AG04449 (cell line): ENCODE measurements at regions of chr1 and their contacts with region 1.

Region 1: DNA sequence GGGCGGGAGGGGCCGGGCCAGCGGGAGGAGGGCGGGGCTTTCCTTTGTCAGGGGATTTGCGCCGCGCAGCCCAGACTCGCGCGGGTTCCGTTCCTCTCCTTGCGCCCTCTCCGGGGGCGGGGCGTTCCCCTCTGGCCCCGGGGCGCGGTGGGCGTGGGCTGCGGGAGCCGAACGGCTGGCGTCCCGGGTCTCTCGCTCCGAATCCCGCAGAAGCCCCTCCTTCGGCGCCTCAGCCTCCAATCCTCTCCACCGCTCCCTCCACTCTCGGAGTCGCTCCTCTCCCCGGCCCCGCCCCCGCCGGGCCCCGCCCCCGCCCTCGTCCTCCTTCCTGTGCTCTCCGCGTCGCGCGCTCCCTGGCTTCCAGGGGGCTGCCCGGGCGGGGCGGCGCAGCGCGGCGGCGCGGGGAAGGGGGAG is 82.8 kb upstream of the BMP8A start:
- DNase-seq: peak; percentile 28
- H3K4me3 ChIP-seq: peak overlapping the region; percentile 68
- CTCF ChIP-seq: no peak

Region 2: DNA sequence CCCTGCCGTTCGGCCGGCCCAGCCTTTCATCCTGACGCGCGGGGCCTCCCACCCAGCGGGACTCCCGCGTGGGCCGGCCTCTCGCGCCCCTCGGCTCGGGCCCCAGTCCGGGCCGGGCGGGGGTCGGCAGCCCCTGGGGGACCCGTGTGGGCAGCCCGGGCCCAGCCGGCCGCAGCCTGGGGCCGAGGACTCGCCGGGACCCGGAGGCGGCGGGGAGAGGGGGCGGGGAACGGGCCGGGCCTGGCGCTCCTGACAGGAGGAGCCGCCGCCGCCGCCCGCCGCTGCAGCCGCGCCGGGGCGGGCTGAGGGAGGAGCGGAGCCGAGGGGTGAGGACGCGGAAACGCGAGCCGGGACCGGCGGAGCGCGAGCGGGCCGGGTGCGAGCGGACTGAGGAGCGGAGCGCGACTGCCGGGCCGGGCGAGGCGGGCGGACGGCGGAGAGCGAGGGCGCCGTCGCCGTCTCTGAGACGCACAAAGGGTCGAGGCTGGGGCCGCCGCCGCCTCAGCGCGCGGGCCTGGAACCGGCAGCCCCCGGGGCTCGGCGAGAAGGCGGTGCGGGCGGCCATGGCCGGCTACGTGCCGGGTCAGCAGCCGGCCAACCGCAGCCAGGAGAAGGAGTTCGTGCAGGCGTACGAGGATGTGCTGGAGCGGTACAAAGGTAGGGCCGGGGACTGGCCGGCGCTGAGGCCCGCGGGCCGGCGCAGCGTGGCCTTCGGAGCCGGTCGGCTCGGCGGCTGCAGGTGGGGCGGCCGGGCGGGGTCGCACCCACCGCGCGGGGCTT is 303.4 kb before region 1 on chr1:
- CTCF ChIA-PET with region 1: interaction called, 49 read pairs
- POLR2A ChIA-PET with region 1: no interaction called
- DNase-seq: no peak
- H3K4me3 ChIP-seq: peak overlapping the region; percentile 79
- CTCF ChIP-seq: no peak

Region 3: GRCh38 chr1:39370602-39371001 is 38.0 kb before region 1 on chr1:
- CTCF ChIA-PET with region 1: interaction called, 11 read pairs
- POLR2A ChIA-PET with region 1: interaction called, 3 read pairs
- DNase-seq: no peak
- H3K4me3 ChIP-seq: no peak overlapping the region
- CTCF ChIP-seq: no peak

Region 4: DNA sequence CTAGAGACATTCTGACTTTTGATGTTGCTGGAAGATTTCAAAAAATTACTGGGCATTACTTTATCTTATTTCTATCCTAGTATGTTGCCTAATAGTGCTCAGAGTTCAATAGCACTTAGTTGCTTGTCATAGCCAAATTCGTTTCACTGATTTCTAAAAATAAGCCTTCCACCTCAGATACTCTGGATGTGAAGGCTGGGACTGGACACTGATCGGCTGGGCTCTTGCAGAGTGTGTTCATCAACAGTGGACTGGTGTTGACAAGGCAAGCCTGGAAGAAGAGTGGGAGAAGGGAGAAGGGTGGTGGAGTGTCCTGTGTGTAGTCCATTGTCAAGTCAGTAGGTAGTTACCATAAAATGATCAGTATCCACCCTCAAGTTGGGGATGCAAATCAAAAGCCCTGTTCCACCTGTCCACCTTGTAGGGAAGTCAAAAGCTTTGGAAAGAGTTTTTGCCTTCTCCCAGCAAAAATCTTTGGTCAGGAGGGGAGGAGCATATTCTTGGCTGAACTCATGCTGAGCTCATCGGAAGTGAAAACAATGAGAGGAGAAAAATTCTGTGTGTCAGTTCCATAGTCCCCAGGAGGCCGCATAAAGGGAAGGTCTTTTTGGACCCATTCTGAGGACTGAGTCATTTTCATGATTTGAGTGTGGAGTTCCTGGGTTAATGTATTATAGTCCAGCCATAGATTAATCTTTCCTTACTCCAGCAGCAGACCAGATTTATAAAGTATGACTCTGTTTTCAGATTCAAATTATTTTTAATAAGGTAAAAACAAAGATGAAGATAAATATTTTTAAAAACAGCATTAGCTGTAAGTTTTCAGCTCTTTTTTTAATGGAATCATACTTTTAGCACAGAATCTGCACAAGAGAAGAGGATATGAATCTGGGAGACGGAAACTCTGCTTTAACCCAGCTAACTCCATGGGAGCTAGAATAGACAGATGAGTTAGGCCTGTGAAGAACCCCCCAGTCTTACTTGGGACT is 16.7 kb before region 1 on chr1:
- CTCF ChIA-PET with region 1: interaction called, 90 read pairs
- POLR2A ChIA-PET with region 1: interaction called, 16 read pairs
- DNase-seq: peak; percentile 24
- H3K4me3 ChIP-seq: no peak overlapping the region
- CTCF ChIP-seq: no peak

Region 5: GRCh38 chr1:39422614-39423013 is 14.0 kb after region 1 on chr1:
- CTCF ChIA-PET with region 1: interaction called, 71 read pairs
- POLR2A ChIA-PET with region 1: interaction called, 5 read pairs
- DNase-seq: no peak
- H3K4me3 ChIP-seq: no peak overlapping the region
- CTCF ChIP-seq: no peak

Region 6: DNA sequence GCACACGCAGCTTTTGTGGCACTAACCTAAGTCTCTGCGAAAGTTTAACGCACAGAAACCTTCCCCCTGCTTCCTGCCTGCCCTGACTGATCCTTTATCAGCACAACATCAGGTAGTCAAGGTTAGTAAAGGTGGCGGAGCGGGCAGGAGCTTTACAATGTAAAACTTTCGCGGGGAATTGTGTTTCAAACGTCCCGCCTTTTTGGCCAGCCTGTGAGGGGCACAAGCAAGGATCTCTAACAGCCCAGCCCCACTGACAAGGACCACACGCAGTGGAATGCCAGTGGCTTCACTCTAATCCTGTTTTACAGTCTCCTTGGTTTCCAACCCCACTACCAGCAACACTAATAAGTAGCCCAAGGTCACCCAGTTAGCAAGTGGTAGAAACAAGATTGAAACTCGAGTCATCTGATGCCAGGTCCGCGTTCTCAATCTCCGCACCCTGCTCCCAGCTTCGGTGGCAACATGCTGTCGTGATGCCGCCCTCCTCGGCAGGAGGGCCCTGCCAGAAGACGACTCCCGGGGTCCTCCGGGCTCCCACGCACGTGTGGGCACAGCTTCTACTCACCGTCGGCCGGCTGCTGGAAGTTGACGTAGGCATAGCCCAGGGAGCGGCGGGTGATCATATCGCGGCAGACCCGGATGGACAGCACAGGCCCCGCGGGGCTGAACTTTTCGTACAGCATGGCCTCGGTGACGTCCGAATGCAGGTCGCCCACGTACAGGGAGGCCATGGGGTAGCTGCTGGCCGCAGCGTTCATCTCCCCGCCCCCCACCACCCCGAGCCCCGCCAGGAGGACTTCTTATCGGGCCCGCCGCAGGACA is 166.8 kb after region 1 on chr1:
- CTCF ChIA-PET with region 1: no interaction called
- POLR2A ChIA-PET with region 1: no interaction called
- DNase-seq: no peak
- H3K4me3 ChIP-seq: peak overlapping the region; percentile 78
- CTCF ChIP-seq: no peak